Activated naive CD8-positive, alpha-beta T cell treated with anti-CD3 and anti-CD28 coated beads, Interleukin-2, amount 10 ng/mL, durations not matched to agents 7 days and 5 days (primary cell): ENCODE measurements at regions of chr4 and their contacts with region 1.

Region 1: GRCh38 chr4:78656968-78657445 is 105.4 kb downstream of the ANXA3 start:
- DNase-seq: no peak
- ATAC-seq: peak; percentile 30
- H3K4me3 Mint-ChIP-seq: peak overlapping the region; percentile 69
- H3K27ac Mint-ChIP-seq: peak overlapping the region; percentile 89
- H3K4me1 Mint-ChIP-seq: peaks cover 41% of the 10 kb centered on the region
- H3K27me3 Mint-ChIP-seq: no peaks in the 10 kb centered on the region

Region 2: DNA sequence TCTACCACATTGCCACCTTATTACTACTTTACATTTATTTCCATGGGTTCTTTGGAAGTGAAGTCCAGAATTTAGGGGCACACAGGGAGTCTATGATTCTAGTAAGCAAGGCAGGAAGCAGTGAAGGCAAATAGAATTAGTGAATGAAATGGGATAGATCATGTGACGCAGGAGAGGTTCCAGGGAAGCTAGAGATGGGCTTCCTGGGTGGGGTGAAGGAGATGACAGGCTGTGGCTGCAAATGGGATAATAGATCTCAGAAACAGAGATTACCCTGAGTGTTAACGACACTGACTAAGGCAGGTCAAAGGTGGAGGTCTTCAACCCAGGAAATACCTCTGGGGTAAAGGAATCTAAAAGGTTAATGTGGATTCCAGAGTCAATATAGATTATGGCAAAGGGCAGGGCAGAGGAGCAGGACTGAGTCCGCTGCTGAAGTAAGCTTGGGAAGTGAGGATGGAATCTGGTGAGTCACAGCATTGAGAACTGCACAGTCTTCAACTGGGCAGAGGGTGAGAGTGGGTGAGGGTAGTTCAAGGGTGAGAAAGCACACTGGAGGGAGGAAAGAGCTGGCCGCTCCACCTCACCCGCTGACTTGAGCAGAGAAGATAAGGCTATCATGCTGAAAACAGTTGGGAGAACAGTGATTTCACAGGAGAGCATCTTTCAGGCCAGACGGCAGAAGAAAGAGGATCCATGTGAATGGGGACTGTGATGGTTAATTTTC is 34.6 kb before region 1 on chr4:
- POLR2A ChIA-PET with region 1: no interaction called
- DNase-seq: no peak
- ATAC-seq: no peak
- H3K4me3 Mint-ChIP-seq: no peak overlapping the region
- H3K27ac Mint-ChIP-seq: no peak overlapping the region
- H3K4me1 Mint-ChIP-seq: peaks cover 18% of the 10 kb centered on the region
- H3K27me3 Mint-ChIP-seq: no peaks in the 10 kb centered on the region

Region 3: DNA sequence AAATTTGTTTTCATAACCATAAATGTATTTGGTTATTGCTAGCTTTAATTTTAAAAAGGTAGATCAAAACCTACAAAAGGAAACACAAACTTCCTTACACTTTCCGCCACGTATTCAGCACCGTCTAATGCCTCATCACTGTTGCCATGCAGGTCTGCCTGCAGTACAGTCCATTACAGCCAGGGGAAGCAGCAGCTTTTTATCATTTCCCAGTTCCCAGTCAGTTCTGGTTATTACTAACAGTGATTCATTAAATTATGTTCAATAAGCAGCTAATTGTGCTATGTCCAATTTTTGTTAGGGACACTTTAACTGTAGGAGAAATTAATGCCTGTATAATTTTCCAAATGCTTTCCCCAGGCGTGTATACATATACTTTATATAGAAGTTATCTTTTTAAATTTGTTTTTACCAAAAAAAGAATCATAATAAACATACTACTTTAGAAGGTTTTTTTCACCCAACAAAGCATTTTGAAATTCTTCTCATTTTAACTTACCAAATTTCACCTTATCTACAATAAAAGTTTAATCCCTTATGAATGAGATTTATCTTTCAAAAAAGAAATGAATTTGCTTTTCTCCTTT is 12.2 kb before region 1 on chr4:
- POLR2A ChIA-PET with region 1: no interaction called
- DNase-seq: no peak
- ATAC-seq: peak; percentile 97
- H3K4me3 Mint-ChIP-seq: no peak overlapping the region
- H3K27ac Mint-ChIP-seq: no peak overlapping the region
- H3K4me1 Mint-ChIP-seq: peaks cover 32% of the 10 kb centered on the region
- H3K27me3 Mint-ChIP-seq: no peaks in the 10 kb centered on the region

Region 4: GRCh38 chr4:78671903-78672815 is 15.2 kb after region 1 on chr4:
- POLR2A ChIA-PET with region 1: no interaction called
- DNase-seq: no peak
- ATAC-seq: no peak
- H3K4me3 Mint-ChIP-seq: no peak overlapping the region
- H3K27ac Mint-ChIP-seq: no peak overlapping the region
- H3K4me1 Mint-ChIP-seq: peaks cover 5% of the 10 kb centered on the region
- H3K27me3 Mint-ChIP-seq: no peaks in the 10 kb centered on the region

Region 5: GRCh38 chr4:78775303-78776030 is 118.5 kb after region 1 on chr4:
- POLR2A ChIA-PET with region 1: interaction called, 17 read pairs
- DNase-seq: no peak
- ATAC-seq: peak; percentile 73
- H3K4me3 Mint-ChIP-seq: peak overlapping the region; percentile 91
- H3K27ac Mint-ChIP-seq: peak overlapping the region; percentile 96
- H3K4me1 Mint-ChIP-seq: peaks cover 12% of the 10 kb centered on the region
- H3K27me3 Mint-ChIP-seq: no peaks in the 10 kb centered on the region